Esophagus muscularis mucosa (tissue), 4 donors: ENCODE measurements at regions of chr20 and their contacts with region 1.

Region 1: DNA sequence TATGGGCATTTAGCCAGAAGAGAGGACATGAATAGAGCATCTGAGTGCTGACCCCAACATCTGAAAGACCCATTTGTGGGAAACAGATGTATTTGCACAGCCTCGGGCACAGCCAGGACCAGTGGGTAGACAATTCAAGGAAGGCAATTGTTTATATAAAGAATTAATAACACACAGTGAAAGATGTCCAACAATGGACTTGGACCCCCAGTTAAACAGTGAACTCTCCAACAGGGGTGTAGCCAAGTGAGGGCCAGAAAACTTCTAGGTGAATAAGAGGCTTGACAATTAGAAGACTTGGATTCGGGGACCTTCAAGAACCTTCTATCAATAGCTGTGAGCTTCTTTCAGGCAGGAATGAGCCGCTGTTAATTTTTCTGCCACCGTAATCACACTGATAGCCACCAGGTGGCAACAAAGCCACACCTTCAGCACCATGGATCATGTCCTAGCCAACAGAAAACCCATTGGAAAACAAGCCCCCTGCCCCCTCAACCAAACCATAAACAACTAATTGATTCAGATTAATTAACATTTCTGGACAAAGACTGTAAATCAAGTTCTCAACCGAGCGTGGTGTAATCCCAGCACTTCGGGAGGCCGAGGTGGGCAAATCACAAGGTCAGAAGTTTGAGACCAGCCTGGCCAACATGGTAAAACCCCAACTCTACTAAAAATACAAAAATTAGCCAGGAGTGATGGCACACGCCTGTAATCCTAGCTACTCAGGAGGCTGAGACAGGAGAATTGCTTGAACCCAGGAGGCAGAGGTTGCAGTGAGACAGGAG is 8.8 kb upstream of the SRSF6 start:
- DNase-seq: no peak
- H3K4me3 ChIP-seq: no peak overlapping the region
- H3K27ac ChIP-seq: no peak overlapping the region
- H3K4me1 ChIP-seq: peaks cover 0 to 7% (median 3%) of the 10 kb centered on the region in 4 donors
- H3K27me3 ChIP-seq: peaks cover 0 to 37% (median under 1%) of the 10 kb centered on the region in 4 donors
- CTCF ChIP-seq: peak; percentile 46 to 62 (median 59)
- EP300 ChIP-seq: no peak
- POLR2A ChIP-seq: no peak

Region 2: GRCh38 chr20:44080646-44081267 is 631.8 kb after region 1 on chr20:
- intact Hi-C with region 1: loop called (anchors 5 kb)
- DNase-seq: peak; percentile 92
- H3K4me3 ChIP-seq: no peak overlapping the region
- H3K27ac ChIP-seq: peak overlapping the region in 1 of 4 donors; percentile 44
- H3K4me1 ChIP-seq: peaks cover 0 to 33% (median 25%) of the 10 kb centered on the region in 4 donors
- H3K27me3 ChIP-seq: no peaks in the 10 kb centered on the region
- CTCF ChIP-seq: peak in 2 of 3 experiments; percentile 100
- EP300 ChIP-seq: no peak
- POLR2A ChIP-seq: no peak